Activated CD4-positive, alpha-beta memory T cell treated with anti-CD3 and anti-CD28 coated beads, Interleukin-2, amount 10 ng/mL, durations not matched to agents 7 days and 5 days (primary cell): ENCODE measurements at regions of chr6 and their contacts with region 1.

Region 1: DNA sequence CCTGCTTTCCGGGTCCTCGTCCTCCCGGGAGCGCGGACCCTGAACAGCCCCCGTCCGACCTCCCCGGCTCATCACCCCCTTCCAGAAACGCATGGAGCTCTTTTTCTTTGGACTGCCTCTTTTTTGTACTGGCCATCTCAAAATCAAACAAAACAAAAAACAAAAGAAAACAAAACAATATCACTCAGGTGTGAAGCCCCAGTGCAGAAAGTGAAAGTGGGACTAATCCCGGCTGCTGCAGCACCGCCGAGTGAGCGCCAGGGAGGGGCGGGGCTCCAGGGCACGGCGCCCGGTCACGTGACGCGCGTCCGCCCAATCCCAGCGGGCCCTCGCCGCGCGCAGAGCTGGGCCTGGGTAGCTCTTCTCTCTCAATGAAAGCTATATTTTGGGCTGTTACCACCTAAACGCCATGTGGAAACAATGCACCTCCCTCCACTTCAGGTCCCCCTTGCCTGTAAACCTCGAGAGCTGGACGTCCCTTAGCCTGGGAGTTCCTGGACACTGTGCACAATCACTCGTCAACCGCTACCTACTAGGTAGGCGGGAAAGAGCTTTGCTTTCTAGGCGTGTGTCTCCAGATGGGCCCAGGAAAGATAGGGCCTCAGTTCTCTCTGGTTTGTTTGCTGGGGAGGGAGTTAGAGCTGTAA is 93.7 kb upstream of the PRDM1 start:
- DNase-seq: peak; percentile 92
- H3K4me3 Mint-ChIP-seq: peak overlapping the region; percentile 87
- H3K27ac Mint-ChIP-seq: peak overlapping the region; percentile 74
- H3K4me1 Mint-ChIP-seq: peaks cover 70% of the 10 kb centered on the region
- H3K27me3 Mint-ChIP-seq: peaks cover 5% of the 10 kb centered on the region

Region 2: DNA sequence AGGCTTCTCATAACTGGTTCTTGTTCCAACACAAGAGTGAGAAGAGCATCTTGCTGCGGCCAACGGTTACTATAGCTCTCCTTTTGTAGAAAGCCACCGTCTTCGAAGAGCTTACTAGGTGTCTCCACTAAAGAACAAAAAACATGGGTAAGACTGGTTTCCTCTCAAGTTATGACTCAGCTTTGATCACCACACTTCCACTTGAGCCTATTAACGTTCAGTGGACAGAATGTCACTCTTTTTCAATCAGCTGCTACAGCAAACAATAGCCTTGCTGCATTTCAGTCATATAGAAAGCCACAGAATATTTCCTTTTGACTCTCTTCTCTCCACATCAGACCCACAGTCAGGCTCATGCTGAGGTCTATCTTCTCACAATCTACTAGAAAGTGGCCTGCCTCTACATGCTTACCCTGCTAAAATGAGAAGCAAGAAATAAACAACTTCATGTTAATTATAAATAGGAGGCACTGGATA is 346.0 kb before region 1 on chr6:
- CTCF ChIA-PET with region 1: no interaction called
- POLR2A ChIA-PET with region 1: interaction called, 28 read pairs
- DNase-seq: peak; percentile 77
- H3K4me3 Mint-ChIP-seq: peak overlapping the region; percentile 40
- H3K27ac Mint-ChIP-seq: peak overlapping the region; percentile 98
- H3K4me1 Mint-ChIP-seq: peaks cover 86% of the 10 kb centered on the region
- H3K27me3 Mint-ChIP-seq: no peaks in the 10 kb centered on the region

Region 3: DNA sequence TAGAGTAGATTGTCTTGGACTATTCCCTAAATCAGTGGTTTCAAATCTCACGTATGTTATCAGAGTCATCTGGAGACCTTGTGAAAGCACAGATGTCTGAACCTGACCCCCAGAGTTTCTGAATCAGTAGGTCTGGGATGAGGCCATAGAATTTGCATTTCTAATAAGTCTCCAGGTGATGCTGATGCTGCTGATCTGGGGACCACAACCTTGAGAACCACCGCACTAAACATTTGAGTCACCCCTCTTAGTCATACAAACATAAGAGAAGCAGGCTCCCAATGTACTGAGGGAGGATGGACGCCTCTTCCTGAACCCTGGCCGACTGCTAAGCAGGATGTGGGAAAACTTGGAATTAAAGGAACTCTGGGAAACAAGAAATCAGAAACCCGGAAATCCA is 94.2 kb before region 1 on chr6:
- CTCF ChIA-PET with region 1: interaction called, 9 read pairs
- POLR2A ChIA-PET with region 1: interaction called, 49 read pairs
- DNase-seq: peak; percentile 62
- H3K4me3 Mint-ChIP-seq: no peak overlapping the region
- H3K27ac Mint-ChIP-seq: no peak overlapping the region
- H3K4me1 Mint-ChIP-seq: peaks cover 27% of the 10 kb centered on the region
- H3K27me3 Mint-ChIP-seq: no peaks in the 10 kb centered on the region

Region 4: GRCh38 chr6:106085984-106086813 is 93.8 kb after region 1 on chr6 and contains the start of gene PRDM1:
- CTCF ChIA-PET with region 1: interaction called, 56 read pairs
- POLR2A ChIA-PET with region 1: interaction called, 131 read pairs
- DNase-seq: peak; percentile 90
- H3K4me3 Mint-ChIP-seq: peak within 1 kb of the TSS; percentile 97
- H3K27ac Mint-ChIP-seq: peak within 1 kb of the TSS; percentile 71
- H3K4me1 Mint-ChIP-seq: peaks cover 68% of the 10 kb centered on the region
- H3K27me3 Mint-ChIP-seq: no peaks in the 10 kb centered on the region
- total RNA-seq, gene PRDM1: 112 to 115 TPM

Region 5: DNA sequence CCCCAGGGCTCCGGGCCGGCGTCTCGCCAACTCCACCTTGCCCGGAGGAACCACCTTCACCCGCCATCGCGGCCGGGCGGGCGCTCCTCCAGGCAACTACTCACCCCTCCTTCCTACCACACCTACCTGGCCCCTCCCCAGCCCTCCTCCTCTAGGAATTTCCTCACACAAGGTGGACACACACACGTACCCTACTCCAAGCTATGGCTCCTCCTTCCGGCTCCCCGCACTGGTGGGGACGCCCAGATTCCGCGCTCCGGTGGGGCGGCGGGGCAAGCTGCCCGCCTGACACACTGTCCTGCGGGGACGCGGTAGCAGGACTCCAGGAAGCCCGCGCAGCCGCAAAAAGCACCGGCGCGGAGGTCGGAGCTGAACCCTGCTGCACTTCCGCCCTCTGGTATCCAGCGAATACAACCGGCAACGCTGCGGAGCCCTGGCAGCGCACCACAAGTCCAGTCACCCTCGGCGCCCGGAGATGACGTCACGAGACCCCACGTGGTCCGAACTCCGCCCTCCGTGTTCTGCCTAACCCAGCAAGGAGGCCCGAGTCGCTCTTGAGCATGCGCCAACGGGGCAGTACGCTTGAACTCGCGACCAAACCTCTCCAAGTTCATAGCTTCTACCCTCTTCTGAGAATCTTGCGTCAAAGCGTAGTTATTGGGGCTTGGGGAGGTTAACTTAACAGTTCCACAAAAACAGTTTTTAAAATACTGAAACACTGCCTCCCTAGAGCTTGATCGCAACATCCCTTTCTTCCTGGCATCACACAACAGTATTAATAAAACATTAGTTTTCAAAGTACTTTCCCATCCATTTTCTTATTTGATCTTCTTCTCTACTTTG is 333.1 kb after region 1 on chr6 and contains the start of gene ATG5:
- CTCF ChIA-PET with region 1: no interaction called
- POLR2A ChIA-PET with region 1: interaction called, 10 read pairs
- DNase-seq: peak; percentile 100
- H3K4me3 Mint-ChIP-seq: peak within 1 kb of the TSS; percentile 98
- H3K27ac Mint-ChIP-seq: peak within 1 kb of the TSS; percentile 97
- H3K4me1 Mint-ChIP-seq: peaks cover 38% of the 10 kb centered on the region
- H3K27me3 Mint-ChIP-seq: peaks cover 15% of the 10 kb centered on the region
- total RNA-seq, gene ATG5: 35.4 to 35.6 TPM